Adrenal gland (tissue), 19 donors: ENCODE measurements at regions of chr9 and their contacts with region 1.

Region 1: GRCh38 chr9:116661037-116661954 is 25.8 kb upstream of the TRIM32 start:
- DNase-seq: peak in 6 of 7 donors; percentile 20 to 37 (median 28)
- H3K4me3 ChIP-seq: no peak overlapping the region
- H3K27ac ChIP-seq: no peak overlapping the region
- H3K4me1 ChIP-seq: peaks cover 0 to 5% of the 10 kb centered on the region in 2 donors
- H3K27me3 ChIP-seq: no peaks in the 10 kb centered on the region
- CTCF ChIP-seq: peak; percentile 48 to 83 (median 75)
- POLR2A ChIP-seq: no peak

Region 2: DNA sequence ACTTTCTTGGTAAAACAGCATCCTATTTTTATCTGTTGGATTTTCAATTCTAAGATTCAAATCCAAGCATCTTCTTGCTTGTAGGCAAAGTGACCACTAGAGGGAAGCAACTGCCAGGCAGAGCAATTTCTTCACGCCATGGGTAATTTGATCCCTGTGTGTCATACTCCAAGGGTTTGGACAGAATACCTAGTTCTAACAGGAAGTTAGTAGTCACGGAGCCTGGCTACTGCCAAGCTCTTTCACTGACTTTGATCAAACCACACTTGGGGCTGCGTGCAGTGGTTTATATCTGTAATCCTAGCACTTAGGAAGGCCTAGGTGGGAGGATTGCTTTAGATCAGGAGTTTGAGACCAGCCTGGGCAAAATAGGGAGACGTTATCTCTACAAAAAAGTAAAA is 1069.7 kb before region 1 on chr9:
- intact Hi-C with region 1: loop called in 1 of 2 experiments (anchors 5 kb)
- DNase-seq: peak; percentile 15 to 79 (median 72)
- H3K4me3 ChIP-seq: no peak overlapping the region
- H3K27ac ChIP-seq: peak overlapping the region in 1 of 5 donors; percentile 69
- H3K4me1 ChIP-seq: no peaks in the 10 kb centered on the region
- H3K27me3 ChIP-seq: peaks cover 4% of the 10 kb centered on the region
- CTCF ChIP-seq: peak in 5 of 6 experiments; percentile 55 to 78 (median 63)
- POLR2A ChIP-seq: no peak

Region 3: DNA sequence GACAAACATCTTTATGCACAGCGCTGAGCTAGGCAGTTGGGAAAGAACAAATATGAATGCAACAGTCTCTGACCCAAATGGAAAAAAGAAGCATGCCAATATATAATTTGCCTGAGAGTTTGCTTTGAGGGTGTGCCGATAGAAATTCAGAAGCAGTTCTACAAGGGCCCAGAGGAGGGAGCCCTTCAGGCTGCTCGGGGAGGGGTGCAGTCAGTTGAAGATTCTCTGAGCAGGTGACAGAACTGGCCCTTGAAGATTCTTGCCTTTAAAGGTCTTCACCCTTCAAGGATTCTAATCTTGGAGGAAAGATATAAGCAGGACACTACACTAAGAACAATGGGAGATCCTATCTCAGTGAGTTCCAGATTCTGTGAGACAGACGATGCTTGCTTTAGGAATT is 511.5 kb before region 1 on chr9:
- intact Hi-C with region 1: loop called in 1 of 2 experiments (anchors 10 kb)
- DNase-seq: peak in 4 of 7 donors; percentile 22 to 57 (median 27)
- H3K4me3 ChIP-seq: no peak overlapping the region
- H3K27ac ChIP-seq: no peak overlapping the region
- H3K4me1 ChIP-seq: peaks cover 4 to 6% of the 10 kb centered on the region in 2 donors
- H3K27me3 ChIP-seq: peaks cover 4% of the 10 kb centered on the region
- CTCF ChIP-seq: peak; percentile 26 to 56 (median 48)
- POLR2A ChIP-seq: no peak

Region 4: DNA sequence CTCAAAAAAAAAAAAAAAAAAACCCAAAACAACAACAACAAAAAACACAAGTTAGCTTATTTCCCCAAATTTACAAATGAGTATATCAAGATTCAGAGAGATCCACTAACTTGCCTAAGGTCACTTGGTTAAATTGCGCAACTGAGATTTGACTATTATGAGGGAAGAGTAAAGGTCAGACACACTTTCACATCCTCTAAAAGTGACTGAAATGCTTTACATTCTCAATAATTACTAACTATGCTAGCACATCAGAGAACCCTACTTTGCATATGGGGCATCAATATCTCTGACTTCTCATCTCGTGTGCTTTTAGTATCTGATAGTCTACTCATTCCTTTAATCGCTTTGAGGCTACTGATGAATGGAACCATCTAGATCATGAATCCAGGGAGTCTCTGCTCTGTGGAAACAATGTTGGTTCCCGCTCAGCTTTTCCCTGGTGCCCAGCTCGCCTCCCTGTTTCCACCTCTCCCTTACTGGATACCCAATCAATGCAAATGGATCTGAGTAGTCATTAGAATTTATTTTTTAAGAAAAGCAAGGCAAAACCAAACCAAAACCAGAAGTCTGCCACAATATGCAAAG is 156.3 kb before region 1 on chr9:
- intact Hi-C with region 1: no loop called
- DNase-seq: no peak
- H3K4me3 ChIP-seq: no peak overlapping the region
- H3K27ac ChIP-seq: no peak overlapping the region
- H3K4me1 ChIP-seq: no peaks in the 10 kb centered on the region
- H3K27me3 ChIP-seq: no peaks in the 10 kb centered on the region
- CTCF ChIP-seq: no peak
- POLR2A ChIP-seq: no peak